ENCODE measurements at regions of chrX and their contacts with region 1.

Region 1: GRCh38 chrX:154091678-154092077 is 5.8 kb downstream of the MECP2 start:
- DNase-seq: no peak
- ATAC-seq: peak in 1 of 2 donors; percentile 38
- H3K4me3 Mint-ChIP-seq: peak overlapping the region in 8 of 10 donors; percentile 25 to 65 (median 47)
- H3K27ac Mint-ChIP-seq: peak overlapping the region in 6 of 10 donors; percentile 13 to 86 (median 56)
- H3K4me1 Mint-ChIP-seq: peaks cover 17 to 69% (median 54%) of the 10 kb centered on the region in 4 donors
- H3K27me3 Mint-ChIP-seq: no peaks in the 10 kb centered on the region

Region 2: DNA sequence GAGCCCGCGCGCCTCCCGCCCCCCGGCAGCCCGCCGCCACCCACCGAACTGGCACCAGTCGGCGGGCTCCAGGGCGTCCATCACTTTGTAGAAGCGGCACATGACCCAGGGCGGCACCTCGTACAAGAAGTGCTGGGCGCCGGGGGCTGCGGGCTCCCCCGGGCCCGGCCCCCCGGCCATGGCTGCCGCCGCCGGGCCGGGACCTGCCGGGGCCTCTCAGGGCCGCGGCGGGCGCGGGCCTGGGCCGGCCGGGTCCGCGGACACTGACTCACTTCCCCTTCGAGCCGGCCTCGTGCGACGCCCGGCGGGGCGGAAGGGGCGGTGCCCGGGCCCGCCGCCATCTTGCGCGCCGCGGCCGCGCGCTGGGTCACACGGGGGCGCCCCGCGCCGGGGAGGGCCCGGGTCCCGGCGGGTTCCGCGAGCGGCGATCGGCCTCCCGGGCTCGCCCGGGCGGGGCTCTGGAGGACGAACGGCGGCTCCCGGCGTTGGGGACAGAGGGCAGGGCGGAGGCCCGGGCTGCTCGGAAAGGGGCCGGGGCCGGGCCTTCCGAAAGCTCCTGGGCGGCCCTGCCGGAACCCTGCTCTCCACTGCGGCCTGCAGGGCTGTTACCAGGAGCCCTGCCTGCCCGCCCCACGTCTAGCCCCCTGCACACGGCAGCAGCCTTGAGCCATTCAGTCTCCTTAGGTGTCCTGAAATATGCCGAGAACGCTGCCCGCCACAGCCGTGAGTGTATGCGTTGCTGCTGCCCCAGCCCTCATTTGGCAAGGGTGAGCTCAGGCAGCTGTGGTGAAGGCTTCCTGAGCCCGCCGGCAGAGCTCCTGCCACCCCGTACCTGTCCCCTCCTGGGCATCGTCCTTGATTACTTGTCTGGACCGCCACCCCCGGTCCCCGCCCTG is 71.8 kb before region 1 on chrX and contains the start of gene IRAK1:
- POLR2A ChIA-PET with region 1: interaction called, 10 read pairs
- DNase-seq: peak in 8 of 10 donors; percentile 15 to 53 (median 47)
- ATAC-seq: peak; percentile 77 to 80
- H3K4me3 Mint-ChIP-seq: peak within 1 kb of the TSS; percentile 79 to 91 (median 86)
- H3K27ac Mint-ChIP-seq: peak within 1 kb of the TSS; percentile 87 to 95 (median 94)
- H3K4me1 Mint-ChIP-seq: peaks cover 10 to 35% (median 22%) of the 10 kb centered on the region in 4 donors
- H3K27me3 Mint-ChIP-seq: no peaks in the 10 kb centered on the region
- polyA plus RNA-seq, gene IRAK1: 23.9 to 44.7 (median 27.8) TPM

Region 3: DNA sequence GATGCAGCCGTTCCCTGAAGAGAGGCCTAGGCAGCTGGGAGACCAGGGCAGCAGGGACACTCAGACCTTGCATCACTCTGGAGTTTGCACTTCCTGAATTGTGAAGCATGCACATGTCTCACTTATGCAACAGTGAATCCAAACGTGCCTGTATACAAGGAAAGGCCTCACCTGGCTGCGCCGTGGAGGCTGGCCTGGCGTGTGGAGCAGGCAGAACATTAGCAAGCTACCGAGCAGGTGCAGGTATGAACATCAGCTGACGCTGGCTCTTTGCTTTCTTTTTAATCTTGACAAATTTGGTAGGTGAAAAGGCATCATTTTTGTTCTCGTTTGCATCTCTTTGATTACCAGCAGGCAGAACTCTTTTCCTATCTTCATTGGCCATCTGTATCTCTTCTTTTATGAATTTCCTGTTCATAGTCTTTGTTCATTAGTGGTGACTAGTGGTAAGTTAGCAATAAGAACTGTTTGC is 34.9 kb before region 1 on chrX:
- POLR2A ChIA-PET with region 1: interaction called, 10 read pairs
- DNase-seq: peak in 3 of 10 donors; percentile 1 to 25 (median 7)
- ATAC-seq: peak; percentile 58 to 59
- H3K4me3 Mint-ChIP-seq: peak overlapping the region in 8 of 10 donors; percentile 0 to 66 (median 27)
- H3K27ac Mint-ChIP-seq: peak overlapping the region; percentile 20 to 92 (median 76)
- H3K4me1 Mint-ChIP-seq: peaks cover 40 to 61% (median 58%) of the 10 kb centered on the region in 4 donors
- H3K27me3 Mint-ChIP-seq: no peaks in the 10 kb centered on the region